ENCODE measurements at regions of chr6 and their contacts with region 1.

Region 1: DNA sequence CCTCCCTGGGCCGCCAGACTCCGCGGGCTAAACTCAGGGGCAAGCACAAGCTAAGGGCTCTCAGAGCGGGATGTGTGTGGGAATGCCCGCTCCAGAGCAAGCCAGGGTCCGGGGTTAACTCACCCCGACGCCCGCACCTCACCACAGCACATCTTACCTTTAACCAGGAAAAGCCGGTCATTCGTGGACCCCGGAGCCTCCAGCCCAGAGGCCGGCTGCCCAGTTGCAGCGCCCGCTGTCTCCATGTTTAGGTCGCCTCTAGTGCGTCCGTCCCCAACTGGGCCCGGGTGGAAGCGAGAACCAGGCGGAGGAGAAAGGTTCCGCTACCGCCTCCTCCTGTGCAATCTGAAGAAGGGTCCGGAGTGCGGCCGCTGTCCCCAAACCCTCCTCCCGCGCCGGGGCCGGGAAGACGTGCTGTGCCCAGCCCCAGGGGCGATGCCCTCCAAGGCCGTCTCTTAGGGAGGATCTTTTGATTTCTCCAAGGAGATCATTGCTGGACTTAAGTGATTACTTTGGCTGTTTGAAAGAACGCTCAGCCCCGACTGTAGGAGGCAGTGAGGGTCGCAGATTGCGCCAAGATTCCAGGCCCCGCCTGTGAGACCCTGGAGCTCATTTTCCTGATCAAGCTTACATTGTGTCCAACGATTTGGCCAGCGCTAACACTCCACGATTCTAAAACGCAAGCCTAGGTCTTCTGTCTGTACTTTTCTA is at the start of gene TMEM242:
- DNase-seq: peak; percentile 93
- H3K4me3 ChIP-seq: peak within 1 kb of the TSS; percentile 60 to 83 (median 81)
- H3K27ac ChIP-seq: peak within 1 kb of the TSS; percentile 70
- H3K4me1 ChIP-seq: peaks cover 10% of the 10 kb centered on the region
- H3K27me3 ChIP-seq: no peaks in the 10 kb centered on the region
- CTCF ChIP-seq: peak in 1 of 2 donors; percentile 36
- total RNA-seq, gene TMEM242: 6.0 to 13.8 TPM

Region 2: GRCh38 chr6:156917213-156917612 is 406.2 kb before region 1 on chr6:
- CTCF ChIA-PET with region 1: no interaction called
- dilution Hi-C with region 1: no loop called
- in situ Hi-C with region 1: no loop called
- intact Hi-C with region 1: no loop called
- DNase-seq: no peak
- H3K4me3 ChIP-seq: no peak overlapping the region
- H3K27ac ChIP-seq: no peak overlapping the region
- H3K4me1 ChIP-seq: no peaks in the 10 kb centered on the region
- H3K27me3 ChIP-seq: no peaks in the 10 kb centered on the region
- CTCF ChIP-seq: no peak

Region 3: DNA sequence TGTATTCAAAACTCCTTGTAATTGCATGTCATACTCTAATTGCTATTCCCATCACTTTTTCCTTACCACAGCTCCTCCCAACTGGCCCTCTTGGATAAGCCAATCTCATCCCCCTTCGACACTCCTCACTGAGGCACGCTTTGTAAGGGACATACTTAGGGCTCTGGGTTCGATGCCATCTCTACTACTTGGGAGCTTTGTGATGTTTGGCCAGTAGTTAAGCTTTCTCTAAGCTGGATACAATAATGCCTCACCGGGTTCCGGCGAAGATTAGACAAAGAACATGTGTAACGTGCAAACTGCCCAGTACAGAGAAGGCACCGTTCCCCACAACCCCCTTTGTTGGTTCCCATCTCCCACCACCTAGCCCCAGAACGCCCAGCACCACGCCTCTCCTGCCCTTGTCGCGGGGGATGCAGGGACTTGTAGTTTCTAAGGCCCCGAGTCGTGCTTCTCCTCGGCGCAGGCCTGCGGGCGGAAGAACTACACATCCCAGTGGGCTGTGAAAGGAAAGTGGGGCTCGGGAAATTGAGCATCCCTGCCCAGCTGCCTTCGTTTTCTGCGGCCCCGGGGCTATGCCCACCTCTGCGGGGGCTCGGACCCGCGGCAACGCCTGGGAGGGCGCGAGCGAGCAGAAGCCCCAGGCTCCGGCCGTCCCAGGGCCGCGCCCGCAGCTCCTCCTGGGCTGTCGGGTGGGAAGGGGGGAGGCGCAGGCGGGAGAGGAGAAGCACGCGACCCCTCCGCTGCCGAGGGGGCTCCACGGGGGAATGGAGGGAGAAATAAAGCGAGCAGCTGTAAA is 56.4 kb after region 1 on chr6:
- CTCF ChIA-PET with region 1: no interaction called
- dilution Hi-C with region 1: loop called (anchors 10 kb)
- in situ Hi-C with region 1: no loop called
- intact Hi-C with region 1: loop called (anchors 1 kb)
- DNase-seq: peak; percentile 84
- H3K4me3 ChIP-seq: peak overlapping the region; percentile 91 to 96 (median 92)
- H3K27ac ChIP-seq: peak overlapping the region; percentile 41
- H3K4me1 ChIP-seq: peaks cover 8% of the 10 kb centered on the region
- H3K27me3 ChIP-seq: no peaks in the 10 kb centered on the region
- CTCF ChIP-seq: no peak

Region 4: GRCh38 chr6:157607317-157608109 is 284.1 kb after region 1 on chr6:
- CTCF ChIA-PET with region 1: no interaction called
- dilution Hi-C with region 1: no loop called
- in situ Hi-C with region 1: loop called in 1 of 2 experiments (anchors 10 kb)
- intact Hi-C with region 1: loop called (anchors 5 kb)
- DNase-seq: no peak
- H3K4me3 ChIP-seq: no peak overlapping the region
- H3K27ac ChIP-seq: no peak overlapping the region
- H3K4me1 ChIP-seq: peaks cover 1% of the 10 kb centered on the region
- H3K27me3 ChIP-seq: peaks cover 5% of the 10 kb centered on the region
- CTCF ChIP-seq: no peak

Region 5: GRCh38 chr6:157614026-157614568 is 290.7 kb after region 1 on chr6:
- CTCF ChIA-PET with region 1: no interaction called
- dilution Hi-C with region 1: no loop called
- in situ Hi-C with region 1: loop called in 1 of 2 experiments (anchors 10 kb)
- intact Hi-C with region 1: loop called (anchors 5 kb)
- DNase-seq: peak; percentile 13
- H3K4me3 ChIP-seq: no peak overlapping the region
- H3K27ac ChIP-seq: no peak overlapping the region
- H3K4me1 ChIP-seq: peaks cover 15% of the 10 kb centered on the region
- H3K27me3 ChIP-seq: no peaks in the 10 kb centered on the region
- CTCF ChIP-seq: no peak

Region 6: DNA sequence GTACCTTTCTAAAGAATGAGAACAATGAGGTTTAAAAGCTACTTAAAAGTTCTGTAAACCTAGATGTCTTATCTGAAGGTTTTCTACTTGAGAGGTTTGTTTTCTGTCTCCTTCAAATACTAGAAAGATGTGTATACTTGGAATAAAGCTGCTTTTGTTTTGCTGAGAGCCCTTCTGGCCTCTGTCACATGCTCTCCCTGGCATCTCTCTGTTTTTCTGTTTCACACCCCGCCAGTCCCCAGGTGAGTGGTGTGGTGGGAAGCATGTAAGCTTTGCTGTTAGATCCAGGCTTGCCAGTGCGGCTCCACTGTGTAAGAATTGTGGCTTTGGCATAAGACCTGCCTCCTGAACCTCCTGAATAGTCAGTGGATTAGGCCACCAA is 556.5 kb after region 1 on chr6:
- CTCF ChIA-PET with region 1: no interaction called
- dilution Hi-C with region 1: no loop called
- in situ Hi-C with region 1: loop called in 1 of 2 experiments (anchors 25 kb)
- intact Hi-C with region 1: loop called (anchors 10 kb)
- DNase-seq: no peak
- H3K4me3 ChIP-seq: no peak overlapping the region
- H3K27ac ChIP-seq: no peak overlapping the region
- H3K4me1 ChIP-seq: no peaks in the 10 kb centered on the region
- H3K27me3 ChIP-seq: no peaks in the 10 kb centered on the region
- CTCF ChIP-seq: no peak

Measured in mammary epithelial cell (primary cell).